Endothelial cell of umbilical vein (primary cell): ENCODE measurements at regions of chr12 and their contacts with region 1.

Region 1: GRCh38 chr12:92717202-92717601 is 14.4 kb downstream of the PLEKHG7 start:
- DNase-seq: peak; percentile 64
- H3K4me3 ChIP-seq: no peak overlapping the region
- H3K27ac ChIP-seq: no peak overlapping the region
- H3K4me1 ChIP-seq: no peaks in the 10 kb centered on the region
- H3K27me3 ChIP-seq: no peaks in the 10 kb centered on the region
- CTCF ChIP-seq: peak; percentile 45 to 52
- POLR2A ChIP-seq: no peak

Region 2: GRCh38 chr12:92529944-92530343 is 187.3 kb before region 1 on chr12:
- CTCF ChIA-PET with region 1: no interaction called
- POLR2A ChIA-PET with region 1: no interaction called
- dilution Hi-C with region 1: no loop called
- intact Hi-C with region 1: no loop called
- DNase-seq: no peak
- H3K4me3 ChIP-seq: no peak overlapping the region
- H3K27ac ChIP-seq: no peak overlapping the region
- H3K4me1 ChIP-seq: no peaks in the 10 kb centered on the region
- H3K27me3 ChIP-seq: no peaks in the 10 kb centered on the region
- CTCF ChIP-seq: no peak
- POLR2A ChIP-seq: no peak

Region 3: GRCh38 chr12:92784795-92785562 is 67.8 kb after region 1 on chr12:
- CTCF ChIA-PET with region 1: interaction called, 22 read pairs
- POLR2A ChIA-PET with region 1: no interaction called
- dilution Hi-C with region 1: no loop called
- intact Hi-C with region 1: loop called (anchors 2 kb)
- DNase-seq: peak; percentile 90
- H3K4me3 ChIP-seq: no peak overlapping the region
- H3K27ac ChIP-seq: no peak overlapping the region
- H3K4me1 ChIP-seq: no peaks in the 10 kb centered on the region
- H3K27me3 ChIP-seq: no peaks in the 10 kb centered on the region
- CTCF ChIP-seq: peak; percentile 26 to 28
- POLR2A ChIP-seq: no peak